Tibial artery (tissue), 4 donors: ENCODE measurements at regions of chr20 and their contacts with region 1.

Region 1: GRCh38 chr20:58650776-58651558 is at the start of gene STX16:
- DNase-seq: peak; percentile 87 to 92
- H3K4me3 ChIP-seq: peak within 1 kb of the TSS; percentile 72 to 92
- H3K27ac ChIP-seq: peak within 1 kb of the TSS; percentile 88 to 91
- H3K4me1 ChIP-seq: peaks cover 0 to 66% (median 42%) of the 10 kb centered on the region in 4 donors
- H3K27me3 ChIP-seq: no peaks in the 10 kb centered on the region
- CTCF ChIP-seq: peak; percentile 49 to 68

Region 2: GRCh38 chr20:58236612-58237330 is 414.2 kb before region 1 on chr20:
- intact Hi-C with region 1: loop called (anchors 2 kb)
- DNase-seq: peak; percentile 63 to 79
- H3K4me3 ChIP-seq: peak overlapping the region; percentile 43
- H3K27ac ChIP-seq: no peak overlapping the region
- H3K4me1 ChIP-seq: peaks cover 0 to 7% (median 2%) of the 10 kb centered on the region in 4 donors
- H3K27me3 ChIP-seq: no peaks in the 10 kb centered on the region
- CTCF ChIP-seq: peak; percentile 83 to 96

Region 3: DNA sequence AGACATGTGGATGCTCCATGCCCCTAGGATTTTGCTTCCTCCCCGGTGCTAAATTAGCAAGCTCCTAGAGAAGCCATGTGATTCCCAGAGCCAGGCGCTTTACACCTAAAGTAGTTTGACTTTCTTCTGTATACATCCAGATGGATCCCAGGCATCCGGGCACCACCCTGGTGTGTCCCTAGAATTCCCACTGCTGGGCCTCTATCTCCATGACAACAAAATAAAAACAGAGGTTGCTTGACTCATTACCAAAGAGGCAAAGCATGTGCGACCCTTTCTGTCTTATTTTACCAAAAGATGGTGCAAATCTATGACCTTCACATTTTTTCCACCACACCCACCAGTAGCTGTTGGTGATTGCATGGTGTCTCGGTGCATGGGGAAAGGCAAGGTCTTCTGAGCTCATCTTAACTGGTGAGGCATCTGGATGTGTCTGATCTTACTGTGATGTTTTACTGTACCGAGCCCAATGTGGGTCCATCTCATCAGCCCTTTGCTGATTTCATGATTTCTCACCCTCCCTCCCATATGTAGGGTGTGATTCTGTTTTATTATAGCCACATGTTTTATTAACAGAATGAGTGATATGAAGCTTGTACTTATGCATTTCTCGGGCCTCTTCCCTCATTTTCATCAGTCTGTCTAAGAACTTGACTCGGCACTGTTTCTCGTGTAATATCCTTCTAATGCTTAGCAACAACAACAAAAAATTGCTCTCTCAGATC is 289.3 kb before region 1 on chr20:
- intact Hi-C with region 1: no loop called
- DNase-seq: no peak
- H3K4me3 ChIP-seq: no peak overlapping the region
- H3K27ac ChIP-seq: no peak overlapping the region
- H3K4me1 ChIP-seq: peaks cover 0 to 4% (median 0%) of the 10 kb centered on the region in 4 donors
- H3K27me3 ChIP-seq: no peaks in the 10 kb centered on the region
- CTCF ChIP-seq: no peak

Region 4: DNA sequence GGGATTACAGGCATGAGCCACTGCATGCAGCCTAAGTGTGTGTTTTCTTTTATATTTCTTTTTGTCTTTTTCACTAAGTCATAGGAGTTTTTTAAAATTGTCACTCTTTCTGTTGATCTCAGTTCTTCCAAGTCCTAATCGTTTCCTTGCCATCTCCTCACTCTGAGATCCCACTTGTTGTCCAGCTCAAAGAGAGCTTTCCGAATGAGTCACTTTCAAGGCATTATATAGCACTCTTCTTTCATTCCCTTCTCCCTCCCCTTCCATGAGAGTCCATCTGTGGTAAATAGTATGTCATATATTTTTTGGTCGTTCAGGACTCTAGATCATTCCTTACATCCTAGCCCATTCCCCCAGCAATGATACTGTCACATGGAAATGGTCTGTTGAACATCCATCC is 257.7 kb before region 1 on chr20:
- intact Hi-C with region 1: loop called (anchors 10 kb)
- DNase-seq: no peak
- H3K4me3 ChIP-seq: no peak overlapping the region
- H3K27ac ChIP-seq: no peak overlapping the region
- H3K4me1 ChIP-seq: peaks cover 0 to 44% (median 25%) of the 10 kb centered on the region in 4 donors
- H3K27me3 ChIP-seq: no peaks in the 10 kb centered on the region
- CTCF ChIP-seq: no peak

Region 5: DNA sequence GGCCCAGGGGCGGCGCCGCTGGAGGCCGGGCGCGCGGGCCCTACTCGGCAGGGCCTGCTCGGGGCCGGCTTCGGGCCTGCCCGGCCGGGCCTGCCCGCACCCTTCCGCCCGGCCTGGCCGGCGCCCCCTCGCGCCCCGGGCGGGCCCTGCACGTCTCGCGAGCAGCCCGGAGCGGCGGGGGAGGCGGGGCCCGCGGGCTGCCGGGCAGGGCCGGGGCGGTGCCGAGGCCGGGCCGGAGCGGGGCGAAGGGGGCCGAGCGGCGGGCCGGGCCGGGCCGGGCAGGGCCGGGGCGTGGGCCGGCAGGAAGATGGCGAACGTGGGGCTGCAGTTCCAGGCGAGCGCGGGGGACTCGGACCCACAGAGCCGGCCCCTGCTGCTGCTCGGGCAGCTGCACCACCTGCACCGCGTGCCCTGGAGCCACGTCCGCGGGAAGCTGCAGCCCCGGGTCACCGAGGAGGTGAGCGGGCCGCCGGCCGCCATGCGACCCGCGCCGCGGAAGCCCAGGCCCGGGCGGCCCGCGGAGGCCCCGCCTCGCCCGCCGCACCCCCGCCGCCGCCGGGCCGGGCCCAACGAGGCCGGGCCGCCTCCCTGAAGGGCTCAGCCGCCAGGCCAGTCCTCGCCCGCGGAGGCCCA is 41.7 kb after region 1 on chr20 and contains the start of gene NPEPL1:
- intact Hi-C with region 1: loop called (anchors 1 kb)
- DNase-seq: peak in 1 of 2 donors; percentile 77
- H3K4me3 ChIP-seq: peak within 1 kb of the TSS; percentile 55 to 70
- H3K27ac ChIP-seq: peak within 1 kb of the TSS; percentile 90 to 94
- H3K4me1 ChIP-seq: peaks cover 0 to 42% (median 23%) of the 10 kb centered on the region in 4 donors
- H3K27me3 ChIP-seq: no peaks in the 10 kb centered on the region
- CTCF ChIP-seq: peak in 1 of 2 experiments; percentile 58